ENCODE measurements at regions of chr16 and their contacts with region 1.

Region 1: DNA sequence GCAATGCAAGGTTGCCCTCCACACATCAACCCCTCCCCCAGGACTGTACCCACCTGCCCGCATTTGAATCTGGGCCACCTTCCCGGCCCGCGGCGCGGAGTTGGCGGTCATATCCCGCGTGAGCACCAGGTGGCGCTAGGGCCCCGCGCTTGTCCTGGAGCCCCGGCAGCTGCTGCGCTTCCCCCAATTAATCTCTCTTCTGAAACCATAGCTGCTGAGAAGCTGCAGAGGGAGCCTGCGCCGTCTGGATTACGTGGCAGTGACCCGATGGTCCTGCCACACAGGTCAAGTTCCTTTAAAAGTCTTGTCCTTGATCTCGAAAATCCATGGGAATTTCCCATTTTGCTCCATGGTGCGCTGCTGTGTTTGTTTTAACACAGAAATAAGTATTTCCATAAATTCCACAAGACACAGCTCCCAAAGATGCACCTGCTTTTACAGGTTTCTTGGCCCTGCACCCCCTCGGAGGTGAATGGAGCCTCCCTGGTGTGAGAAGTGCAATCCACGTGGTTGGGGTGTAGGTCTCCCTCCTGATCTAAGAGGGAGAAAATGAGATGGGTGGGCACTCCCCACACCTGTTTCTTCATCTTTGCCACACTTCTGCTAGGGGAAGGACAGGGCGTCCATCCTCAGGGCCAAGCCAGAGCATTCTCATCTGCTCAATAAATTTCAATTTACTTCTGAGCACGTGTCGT is 22.1 kb downstream of the COX4I1 start:
- DNase-seq: peak; percentile 74
- H3K4me3 ChIP-seq: no peak overlapping the region
- H3K27ac ChIP-seq: no peak overlapping the region
- H3K4me1 ChIP-seq: no peaks in the 10 kb centered on the region
- H3K27me3 ChIP-seq: peaks cover 26% of the 10 kb centered on the region
- CTCF ChIP-seq: peak; percentile 96

Region 2: GRCh38 chr16:85986931-85987749 is 165.6 kb after region 1 on chr16:
- CTCF ChIA-PET with region 1: interaction called, 30 read pairs
- POLR2A ChIA-PET with region 1: no interaction called
- intact Hi-C with region 1: loop called (anchors 1 kb)
- DNase-seq: peak; percentile 23
- H3K4me3 ChIP-seq: no peak overlapping the region
- H3K27ac ChIP-seq: no peak overlapping the region
- H3K4me1 ChIP-seq: no peaks in the 10 kb centered on the region
- H3K27me3 ChIP-seq: peaks cover 36% of the 10 kb centered on the region
- CTCF ChIP-seq: 0 out of 2 replicates have a peak, but pooled peaks have one; percentile 29

Region 3: DNA sequence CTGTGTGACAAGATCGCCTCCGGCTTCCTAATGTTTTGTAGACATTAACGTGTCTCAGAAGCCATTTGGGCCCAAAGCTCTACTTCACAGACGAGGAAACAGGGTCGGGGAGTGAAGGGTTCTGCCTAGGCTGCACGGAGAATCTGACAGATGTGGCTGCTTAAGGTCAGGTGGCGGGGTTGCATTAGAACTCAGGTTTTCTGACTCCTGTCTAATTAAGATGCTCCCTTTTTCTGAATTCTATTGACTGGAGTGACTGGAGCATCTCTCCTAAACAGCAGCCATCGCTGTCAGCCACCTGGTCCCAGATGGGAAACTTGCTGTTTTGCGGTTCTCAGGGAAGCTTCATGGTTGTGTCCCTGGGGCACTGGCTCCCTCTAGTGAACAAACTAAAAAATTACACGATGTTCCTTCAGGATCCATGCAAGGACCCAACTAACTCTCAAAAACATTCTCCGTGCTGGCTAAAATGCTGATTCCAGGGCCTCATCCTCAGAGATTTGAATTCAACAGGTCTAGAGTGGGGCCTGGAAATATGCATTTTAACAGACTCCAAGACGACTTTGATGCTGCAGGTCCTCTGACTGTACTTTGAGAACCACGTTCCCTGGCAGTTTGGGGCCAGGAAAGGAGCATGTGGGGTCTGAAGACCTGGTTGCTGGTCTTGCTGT is 194.7 kb after region 1 on chr16:
- CTCF ChIA-PET with region 1: interaction called, 19 read pairs
- POLR2A ChIA-PET with region 1: no interaction called
- intact Hi-C with region 1: loop called (anchors 1 kb)
- DNase-seq: peak; percentile 67
- H3K4me3 ChIP-seq: no peak overlapping the region
- H3K27ac ChIP-seq: no peak overlapping the region
- H3K4me1 ChIP-seq: no peaks in the 10 kb centered on the region
- H3K27me3 ChIP-seq: peaks cover 38% of the 10 kb centered on the region
- CTCF ChIP-seq: peak; percentile 77

Region 4: GRCh38 chr16:86383488-86384262 is 562.1 kb after region 1 on chr16:
- CTCF ChIA-PET with region 1: no interaction called
- POLR2A ChIA-PET with region 1: no interaction called
- intact Hi-C with region 1: no loop called
- DNase-seq: no peak
- H3K4me3 ChIP-seq: no peak overlapping the region
- H3K27ac ChIP-seq: no peak overlapping the region
- H3K4me1 ChIP-seq: no peaks in the 10 kb centered on the region
- H3K27me3 ChIP-seq: peaks cover 24% of the 10 kb centered on the region
- CTCF ChIP-seq: no peak